GM12878 (cell line): ENCODE measurements at regions of chr20 and their contacts with region 1.

Region 1: DNA sequence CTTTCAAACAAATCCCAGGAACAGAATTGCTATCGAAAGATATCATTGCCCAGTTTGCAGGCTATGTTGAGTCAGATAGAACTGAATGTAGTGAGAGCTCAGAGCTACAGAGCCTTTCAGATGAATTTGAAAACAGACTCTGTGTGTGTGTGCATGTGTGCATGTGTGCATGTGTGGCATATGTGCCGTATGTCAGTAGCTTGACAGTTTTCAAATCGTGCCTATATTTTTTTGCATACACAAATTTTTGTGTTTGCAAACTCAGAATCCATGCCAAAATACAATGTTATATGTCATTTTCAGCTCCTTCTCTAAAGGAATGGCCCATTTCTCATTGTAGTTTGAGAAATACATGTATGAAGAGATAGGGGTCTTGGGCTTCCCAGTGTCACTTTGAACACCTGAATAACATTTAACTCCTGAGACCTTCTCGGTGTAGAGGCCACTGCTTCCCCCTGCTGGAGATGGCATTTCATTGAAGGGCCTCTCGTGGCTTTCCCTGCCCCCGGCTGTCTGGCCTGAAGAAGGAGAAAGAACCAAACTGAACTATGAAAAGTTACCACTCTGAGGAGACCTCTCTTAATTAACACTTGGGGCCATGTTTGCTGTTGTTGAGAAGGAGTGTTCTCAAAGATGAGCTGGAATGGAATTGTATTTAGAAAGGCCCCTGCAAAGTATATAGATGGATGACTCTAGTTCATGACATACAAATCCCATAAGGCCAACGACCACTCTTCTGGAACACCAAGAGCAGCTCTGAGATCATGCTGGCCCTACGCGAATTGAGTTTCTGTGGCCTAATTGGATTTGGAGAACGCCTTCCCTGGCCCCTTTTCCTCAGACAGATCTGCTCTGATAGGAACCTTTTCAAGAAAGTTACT is 58.7 kb downstream of the VAPB start:
- DNase-seq: no peak
- ATAC-seq: peak; percentile 86
- H3K4me3 ChIP-seq: no peak overlapping the region
- H3K27ac ChIP-seq: no peak overlapping the region
- H3K4me1 ChIP-seq: peaks cover 13% of the 10 kb centered on the region
- H3K27me3 ChIP-seq: no peaks in the 10 kb centered on the region
- CTCF ChIP-seq: peak; percentile 71 to 78 (median 73)
- EP300 ChIP-seq: no peak
- POLR2A ChIP-seq: no peak
- RAD21 ChIP-seq: peak; percentile 86

Region 2: DNA sequence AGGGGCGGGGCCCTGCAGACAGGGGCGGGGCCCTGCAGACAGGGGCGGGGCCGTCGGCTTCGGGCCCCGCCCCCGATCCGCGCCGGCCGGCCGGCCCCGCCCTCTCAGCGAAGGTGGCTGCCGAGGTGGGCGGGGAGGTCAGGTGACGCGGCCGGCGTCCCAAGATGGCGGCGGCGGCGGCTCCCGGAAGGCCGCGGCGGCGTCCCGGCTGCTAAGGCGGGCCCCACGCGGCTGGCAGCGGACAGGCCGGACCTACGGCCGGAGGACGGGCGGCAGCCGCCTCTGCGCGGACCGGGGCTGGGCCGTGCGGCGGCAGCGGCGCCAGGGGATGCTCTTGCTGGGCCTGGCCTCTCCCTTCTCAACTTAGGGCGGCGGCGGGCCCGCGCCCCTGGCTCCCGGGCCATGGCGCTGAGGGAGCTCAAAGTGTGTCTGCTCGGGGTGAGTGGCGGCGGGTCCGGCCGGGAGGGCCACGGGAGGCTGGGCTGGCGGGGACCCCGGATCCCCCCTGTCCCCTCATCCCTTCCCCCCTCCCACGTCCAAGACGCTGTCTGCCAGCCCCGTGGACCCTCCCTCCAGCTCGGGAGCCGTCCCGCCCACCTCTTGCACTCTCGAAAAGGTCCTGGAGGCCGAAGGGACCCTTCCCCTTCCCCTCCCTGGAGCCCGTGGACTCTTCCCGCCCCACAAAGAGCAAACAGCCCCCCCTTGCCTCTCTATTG is 138.0 kb before region 1 on chr20 and contains the start of gene RAB22A:
- CTCF ChIA-PET with region 1: interaction called, 12 read pairs
- POLR2A ChIA-PET with region 1: interaction called, 4 read pairs
- RAD21 ChIA-PET with region 1: no interaction called
- SMC1A ChIA-PET with region 1: interaction called, 3 read pairs
- in situ Hi-C with region 1: no loop called
- intact Hi-C with region 1: no loop called
- DNase-seq: no peak
- ATAC-seq: peak; percentile 73
- H3K4me3 ChIP-seq: peak within 1 kb of the TSS; percentile 100
- H3K27ac ChIP-seq: peak within 1 kb of the TSS; percentile 65
- H3K4me1 ChIP-seq: peaks cover 16% of the 10 kb centered on the region; the same call in 1 of the 2 replicates
- H3K27me3 ChIP-seq: no peaks in the 10 kb centered on the region
- CTCF ChIP-seq: no peak
- EP300 ChIP-seq: no peak
- POLR2A ChIP-seq: peak; percentile 96
- RAD21 ChIP-seq: no peak
- polyA plus RNA-seq, gene RAB22A: 2.7 to 3.7 TPM

Region 3: DNA sequence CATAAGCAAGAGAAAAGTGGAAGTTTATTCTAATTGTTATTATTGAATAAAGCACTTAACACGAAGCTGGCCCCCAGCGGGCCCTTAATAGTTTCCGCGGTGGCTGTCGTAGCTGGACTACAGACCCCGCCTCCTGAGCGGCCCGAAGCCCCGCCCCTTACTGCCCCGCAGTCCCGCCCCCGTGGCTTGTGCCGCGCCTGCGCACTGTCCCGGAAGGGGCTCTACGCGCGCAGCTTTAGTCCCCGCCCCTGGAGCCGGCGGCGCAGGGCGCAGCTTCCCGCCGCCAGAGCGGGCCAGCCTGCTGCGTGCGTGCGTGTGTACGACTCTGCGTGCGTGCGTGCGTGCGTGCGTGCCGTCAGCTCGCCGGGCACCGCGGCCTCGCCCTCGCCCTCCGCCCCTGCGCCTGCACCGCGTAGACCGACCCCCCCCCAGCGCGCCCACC is 58.8 kb before region 1 on chr20 and contains the start of gene VAPB:
- CTCF ChIA-PET with region 1: interaction called, 6 read pairs
- POLR2A ChIA-PET with region 1: interaction called, 4 read pairs
- RAD21 ChIA-PET with region 1: interaction called, 12 read pairs
- SMC1A ChIA-PET with region 1: interaction called, 5 read pairs
- in situ Hi-C with region 1: no loop called
- intact Hi-C with region 1: no loop called
- DNase-seq: peak; percentile 88
- ATAC-seq: peak; percentile 98
- H3K4me3 ChIP-seq: peak within 1 kb of the TSS; percentile 81
- H3K27ac ChIP-seq: peak within 1 kb of the TSS; percentile 91
- H3K4me1 ChIP-seq: peaks cover 13% of the 10 kb centered on the region
- H3K27me3 ChIP-seq: no peaks in the 10 kb centered on the region
- CTCF ChIP-seq: no peak
- EP300 ChIP-seq: no peak
- POLR2A ChIP-seq: peak; percentile 87
- RAD21 ChIP-seq: no peak
- polyA plus RNA-seq, gene VAPB: 3.2 to 10.7 TPM

Region 4: DNA sequence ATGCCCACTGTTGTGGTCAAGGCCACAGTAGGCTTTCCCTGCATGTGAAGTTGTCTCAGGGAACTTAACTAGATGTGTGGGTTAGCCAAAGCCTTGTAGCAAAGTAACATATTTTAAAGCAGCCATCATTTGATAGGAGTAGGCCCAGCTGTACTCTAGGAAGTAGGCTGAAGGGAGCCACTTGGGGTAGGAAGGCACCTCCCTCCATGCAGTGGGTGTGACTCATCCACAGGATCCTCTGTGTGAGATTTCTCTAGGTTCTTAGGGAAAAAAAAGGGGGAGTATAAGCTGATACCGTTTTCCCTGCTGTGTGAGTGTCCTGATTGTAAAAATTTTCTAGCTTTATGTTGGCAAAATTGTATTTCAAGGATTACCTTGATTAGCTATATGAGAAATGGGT is 14.0 kb before region 1 on chr20:
- CTCF ChIA-PET with region 1: interaction called, 17 read pairs
- POLR2A ChIA-PET with region 1: interaction called, 3 read pairs
- RAD21 ChIA-PET with region 1: no interaction called
- SMC1A ChIA-PET with region 1: interaction called, 3 read pairs
- in situ Hi-C with region 1: no loop called
- intact Hi-C with region 1: no loop called
- DNase-seq: no peak
- ATAC-seq: no peak
- H3K4me3 ChIP-seq: no peak overlapping the region
- H3K27ac ChIP-seq: no peak overlapping the region
- H3K4me1 ChIP-seq: 0 out of 2 replicates have a peak, but pooled peaks cover 2% of the 10 kb centered on the region
- H3K27me3 ChIP-seq: no peaks in the 10 kb centered on the region
- CTCF ChIP-seq: no peak
- EP300 ChIP-seq: no peak
- POLR2A ChIP-seq: no peak
- RAD21 ChIP-seq: no peak